ENCODE measurements at regions of chr19 and their contacts with region 1.

Region 1: DNA sequence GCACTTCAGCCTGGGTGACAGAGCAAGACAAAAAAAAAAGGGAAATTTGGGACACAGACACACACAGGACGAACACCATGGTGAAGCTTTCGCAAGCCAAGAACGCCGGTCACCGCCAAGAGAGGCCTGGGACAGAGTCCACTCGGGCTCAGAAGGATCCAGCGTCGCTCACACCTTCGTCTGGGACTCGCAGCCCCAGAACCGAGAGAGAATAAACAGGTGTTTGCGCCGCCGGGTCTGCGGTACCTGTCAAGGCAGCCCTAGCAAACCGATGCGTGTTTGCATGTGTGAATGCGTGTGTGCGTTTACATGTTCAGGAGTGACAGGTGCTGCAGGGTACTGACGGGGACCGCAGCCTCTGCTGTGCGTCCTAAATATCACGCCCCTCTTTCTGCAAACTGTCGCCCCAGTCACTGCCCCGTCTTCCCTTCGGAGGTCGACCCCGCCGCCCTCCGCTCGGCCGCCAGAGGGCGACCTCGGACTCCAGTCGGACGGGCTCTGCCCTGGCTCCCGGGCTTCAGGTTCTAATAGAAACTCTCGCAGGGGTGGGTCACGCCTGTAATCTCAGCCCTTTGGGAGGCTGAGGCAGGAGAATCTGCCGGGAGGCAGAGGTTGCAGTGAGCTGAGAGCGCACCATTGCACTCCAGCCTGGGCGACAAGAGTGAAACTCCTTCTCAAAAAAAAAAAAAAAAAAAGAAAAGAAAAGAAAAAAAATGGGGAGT is 11.8 kb upstream of the CSNK1G2 start:
- DNase-seq: peak; percentile 4
- H3K4me3 ChIP-seq: peak overlapping the region; percentile 20
- H3K27me3 ChIP-seq: no peaks in the 10 kb centered on the region
- CTCF ChIP-seq: peak; percentile 97

Region 2: GRCh38 chr19:1825909-1826556 is 103.1 kb before region 1 on chr19:
- CTCF ChIA-PET with region 1: no interaction called
- POLR2A ChIA-PET with region 1: no interaction called
- DNase-seq: no peak
- H3K4me3 ChIP-seq: no peak overlapping the region
- H3K27me3 ChIP-seq: no peaks in the 10 kb centered on the region
- CTCF ChIP-seq: peak; percentile 93

Region 3: DNA sequence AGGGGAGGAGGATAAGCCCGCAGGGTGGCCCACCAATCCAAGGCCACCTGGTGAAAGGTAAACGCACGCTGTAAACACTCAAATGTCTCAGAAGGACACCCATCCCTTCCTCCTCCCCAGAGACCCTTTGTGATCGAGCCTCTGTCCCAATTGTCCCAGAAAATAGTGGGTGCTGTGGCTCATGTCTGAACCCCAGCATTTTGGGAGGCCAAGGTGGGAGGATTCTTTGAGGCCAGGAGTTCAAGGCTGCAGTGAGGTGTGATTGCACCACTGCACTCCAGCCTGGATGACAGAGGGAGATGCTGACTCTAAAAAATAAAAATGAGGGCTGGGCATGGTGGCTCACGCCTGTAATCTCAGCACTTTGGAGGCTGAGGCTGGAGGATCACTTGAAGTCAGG is 40.8 kb before region 1 on chr19:
- CTCF ChIA-PET with region 1: no interaction called
- POLR2A ChIA-PET with region 1: no interaction called
- DNase-seq: no peak
- H3K4me3 ChIP-seq: no peak overlapping the region
- H3K27me3 ChIP-seq: no peaks in the 10 kb centered on the region
- CTCF ChIP-seq: no peak

Region 4: GRCh38 chr19:1918975-1919374 is 10.2 kb before region 1 on chr19:
- CTCF ChIA-PET with region 1: interaction called, 10 read pairs
- POLR2A ChIA-PET with region 1: no interaction called
- DNase-seq: no peak
- H3K4me3 ChIP-seq: no peak overlapping the region
- H3K27me3 ChIP-seq: no peaks in the 10 kb centered on the region
- CTCF ChIP-seq: no peak

Region 5: DNA sequence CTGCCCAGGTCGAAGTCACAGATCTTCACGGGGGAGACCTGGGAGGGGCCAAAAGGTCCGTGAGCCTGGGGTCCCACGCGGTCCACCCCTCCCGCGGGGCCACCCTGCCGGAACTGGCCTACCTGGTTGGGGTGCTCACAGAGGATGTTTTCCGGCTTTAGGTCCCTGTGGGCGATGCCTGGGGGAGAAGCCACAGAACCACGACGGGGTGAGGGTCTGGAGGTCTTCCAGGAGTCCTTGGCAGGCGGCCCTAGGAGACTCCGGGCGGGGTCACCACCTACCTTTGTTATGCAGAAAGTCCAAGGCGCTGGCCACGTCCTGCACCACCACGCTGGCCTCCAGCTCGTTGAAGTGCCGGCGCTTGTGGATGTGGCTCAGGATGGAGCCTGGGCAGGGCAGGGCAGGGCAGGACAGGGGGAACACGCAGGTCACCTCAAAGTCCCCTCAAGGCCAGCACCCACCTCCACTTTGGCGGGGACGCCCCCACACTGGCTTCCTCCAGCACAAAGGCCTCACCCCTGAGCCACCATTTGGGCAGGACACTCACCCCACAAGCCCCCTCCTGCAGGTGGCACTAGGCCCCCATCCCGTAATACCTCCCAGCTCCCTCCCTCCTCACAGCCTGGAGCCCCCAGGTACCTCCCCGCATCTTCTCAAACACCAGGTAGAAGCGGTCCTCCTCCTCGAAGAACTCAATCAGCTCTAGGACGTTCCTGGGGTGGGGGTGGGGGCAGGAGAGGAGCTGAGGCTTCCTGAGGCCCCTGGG is 113.5 kb after region 1 on chr19:
- CTCF ChIA-PET with region 1: no interaction called
- POLR2A ChIA-PET with region 1: no interaction called
- DNase-seq: no peak
- H3K4me3 ChIP-seq: no peak overlapping the region
- H3K27me3 ChIP-seq: no peaks in the 10 kb centered on the region
- CTCF ChIP-seq: no peak

Measured in BJ (cell line).